ENCODE measurements at regions of chr3 and their contacts with region 1.

Region 1: DNA sequence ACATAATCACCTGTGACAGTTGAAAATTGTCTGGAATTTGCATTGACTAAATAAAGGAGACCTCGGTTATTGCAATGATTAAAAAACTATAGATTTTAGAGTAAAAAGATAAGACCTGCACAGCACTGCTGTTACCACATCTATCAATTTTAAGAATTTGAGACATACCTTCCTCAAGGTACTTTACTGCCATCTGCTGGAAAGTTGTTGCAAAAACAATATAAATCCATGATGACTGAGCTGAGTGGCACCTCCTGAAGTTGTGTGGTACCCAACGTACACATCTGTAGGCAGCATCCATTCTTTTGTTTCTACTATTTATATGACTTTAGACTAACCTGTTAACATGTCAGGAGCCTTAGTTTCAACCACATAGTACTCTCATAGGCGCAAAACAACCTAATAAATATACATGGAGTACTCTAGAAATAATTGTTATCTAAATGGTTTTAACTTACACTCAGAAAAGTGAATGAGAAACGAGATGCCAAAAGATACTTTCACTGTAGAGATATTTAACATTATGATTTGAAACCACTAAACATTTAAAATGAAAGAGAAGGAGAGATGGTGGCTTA is 106.7 kb downstream of the GHSR start:
- DNase-seq: peak; percentile 49
- H3K4me3 Mint-ChIP-seq: no peak overlapping the region
- H3K27ac Mint-ChIP-seq: no peak overlapping the region
- H3K4me1 Mint-ChIP-seq: no peaks in the 10 kb centered on the region
- H3K27me3 Mint-ChIP-seq: no peaks in the 10 kb centered on the region

Region 2: GRCh38 chr3:172666873-172667694 is 325.5 kb after region 1 on chr3:
- CTCF ChIA-PET with region 1: interaction called, 14 read pairs
- POLR2A ChIA-PET with region 1: no interaction called
- DNase-seq: peak; percentile 90
- H3K4me3 Mint-ChIP-seq: no peak overlapping the region
- H3K27ac Mint-ChIP-seq: peak overlapping the region; percentile 28
- H3K4me1 Mint-ChIP-seq: peaks cover 25% of the 10 kb centered on the region
- H3K27me3 Mint-ChIP-seq: peaks cover 5% of the 10 kb centered on the region

Measured in activated CD4-positive, alpha-beta T cell treated with anti-CD3 and anti-CD28 coated beads, Interleukin-2, amount 10 ng/mL, durations not matched to agents 7 days and 5 days (primary cell).